ENCODE measurements at regions of chr16 and their contacts with region 1.

Region 1: GRCh38 chr16:69465083-69465721 is 40.8 kb downstream of the CYB5B start:
- H3K4me3 Mint-ChIP-seq: no peak overlapping the region
- H3K27ac Mint-ChIP-seq: no peak overlapping the region
- H3K4me1 Mint-ChIP-seq: peaks cover 34% of the 10 kb centered on the region
- H3K27me3 Mint-ChIP-seq: peaks cover 70% of the 10 kb centered on the region

Region 2: GRCh38 chr16:69513188-69513961 is 48.2 kb after region 1 on chr16:
- intact Hi-C with region 1: loop called (anchors 5 kb)
- H3K4me3 Mint-ChIP-seq: no peak overlapping the region
- H3K27ac Mint-ChIP-seq: peak overlapping the region; percentile 55
- H3K4me1 Mint-ChIP-seq: peaks cover 53% of the 10 kb centered on the region
- H3K27me3 Mint-ChIP-seq: peaks cover 48% of the 10 kb centered on the region